CD4-positive, alpha-beta memory T cell (primary cell): ENCODE measurements at regions of chr15 and their contacts with region 1.

Region 1: GRCh38 chr15:77870195-77871065 is 207.1 kb downstream of the TBC1D2B start:
- DNase-seq: peak in 4 of 5 donors; percentile 8 to 26 (median 10)
- H3K4me3 ChIP-seq: no peak overlapping the region
- H3K4me3 Mint-ChIP-seq: no peak overlapping the region
- H3K27ac ChIP-seq: no peak overlapping the region
- H3K27ac Mint-ChIP-seq: no peak overlapping the region
- H3K4me1 ChIP-seq: no peaks in the 10 kb centered on the region
- H3K4me1 Mint-ChIP-seq: peaks cover 0 to 4% (median 0%) of the 10 kb centered on the region in 4 donors
- H3K27me3 ChIP-seq: no peaks in the 10 kb centered on the region
- H3K27me3 Mint-ChIP-seq: peaks cover 0 to 3% of the 10 kb centered on the region in 2 donors

Region 2: DNA sequence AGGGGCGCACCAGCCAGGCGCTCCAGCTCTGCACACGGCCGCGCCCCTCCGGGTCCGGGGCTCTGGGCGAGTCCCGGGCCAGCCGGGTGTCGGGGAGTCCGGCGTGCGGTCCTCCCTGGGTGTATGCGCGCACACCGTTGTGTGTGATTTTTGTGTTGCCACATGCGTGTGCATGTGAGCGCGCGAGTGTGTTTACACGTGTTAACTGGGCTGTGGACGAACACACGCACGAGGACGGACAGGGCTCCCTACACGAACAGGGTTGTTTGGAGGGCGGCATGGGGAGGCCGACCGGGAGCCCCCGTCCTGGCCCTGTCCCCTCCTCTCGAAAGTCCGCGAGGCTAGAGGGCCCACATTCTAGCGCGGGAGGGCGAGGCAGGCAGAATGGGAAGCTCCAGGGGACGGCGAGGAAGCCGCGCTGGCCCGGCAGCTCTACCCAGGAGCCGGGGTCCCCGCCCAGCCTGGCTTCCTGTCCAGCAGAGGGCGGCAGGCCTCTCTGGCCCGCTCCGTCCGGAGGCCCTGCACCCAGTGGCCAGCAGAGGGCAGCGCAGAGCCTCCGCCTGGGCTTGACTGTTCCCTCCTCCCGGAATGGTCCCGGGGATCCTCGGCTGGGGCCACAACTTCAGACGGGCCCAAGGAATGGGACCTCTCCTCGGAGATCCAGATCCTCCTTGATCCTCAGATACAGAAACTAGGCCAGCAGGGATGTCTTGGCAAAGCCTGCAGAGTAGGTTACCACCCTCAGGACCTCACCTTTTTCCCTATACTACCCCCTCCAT is 237.1 kb before region 1 on chr15:
- CTCF ChIA-PET with region 1: interaction called, 3 read pairs
- POLR2A ChIA-PET with region 1: no interaction called
- intact Hi-C with region 1: loop called (anchors 5 kb)
- DNase-seq: peak in 3 of 5 donors; percentile 19 to 26 (median 22)
- H3K4me3 ChIP-seq: no peak overlapping the region
- H3K4me3 Mint-ChIP-seq: peak overlapping the region; percentile 52 to 75 (median 68)
- H3K27ac ChIP-seq: no peak overlapping the region
- H3K27ac Mint-ChIP-seq: no peak overlapping the region
- H3K4me1 ChIP-seq: peaks cover 14% of the 10 kb centered on the region
- H3K4me1 Mint-ChIP-seq: peaks cover 5 to 20% (median 12%) of the 10 kb centered on the region in 4 donors
- H3K27me3 ChIP-seq: peaks cover 13% of the 10 kb centered on the region
- H3K27me3 Mint-ChIP-seq: peaks cover 28 to 41% of the 10 kb centered on the region in 2 donors

Region 3: GRCh38 chr15:78035321-78035751 is 164.9 kb after region 1 on chr15:
- CTCF ChIA-PET with region 1: no interaction called
- POLR2A ChIA-PET with region 1: no interaction called
- intact Hi-C with region 1: no loop called
- DNase-seq: peak in 2 of 5 donors; percentile 35 to 84
- H3K4me3 ChIP-seq: peak overlapping the region in 1 of 2 donors; percentile 37
- H3K4me3 Mint-ChIP-seq: peak overlapping the region in 7 of 8 donors; percentile 59 to 78 (median 71)
- H3K27ac ChIP-seq: peak overlapping the region; percentile 69
- H3K27ac Mint-ChIP-seq: peak overlapping the region; percentile 88 to 97 (median 95)
- H3K4me1 ChIP-seq: peaks cover 98% of the 10 kb centered on the region
- H3K4me1 Mint-ChIP-seq: peaks cover 73 to 92% (median 84%) of the 10 kb centered on the region in 4 donors
- H3K27me3 ChIP-seq: no peaks in the 10 kb centered on the region
- H3K27me3 Mint-ChIP-seq: no peaks in the 10 kb centered on the region